ENCODE measurements at regions of chr10 and their contacts with region 1.

Region 1: DNA sequence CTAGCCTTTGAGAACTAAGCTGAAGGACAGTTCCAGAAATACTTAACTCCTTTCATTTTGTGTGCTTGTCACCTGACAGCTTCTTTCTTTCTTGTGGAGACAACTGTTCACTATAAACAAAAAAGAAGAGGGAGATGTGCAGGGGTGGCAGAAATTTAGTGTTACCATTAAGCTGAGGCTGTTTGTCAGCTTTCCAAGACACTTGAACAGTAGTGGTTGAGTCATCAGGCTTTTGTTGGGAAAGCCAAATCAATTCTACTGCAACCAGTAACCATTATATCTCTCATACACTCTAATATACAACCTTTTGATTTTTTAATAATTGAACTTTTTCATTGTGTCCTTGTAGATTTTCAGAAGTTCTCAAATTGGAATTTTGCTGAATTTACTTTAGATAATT is 75.3 kb downstream of the POLL start:
- DNase-seq: no peak
- H3K4me3 ChIP-seq: no peak overlapping the region
- H3K27ac ChIP-seq: no peak overlapping the region
- H3K4me1 ChIP-seq: no peaks in the 10 kb centered on the region
- H3K27me3 ChIP-seq: no peaks in the 10 kb centered on the region
- CTCF ChIP-seq: no peak
- EP300 ChIP-seq: no peak
- POLR2A ChIP-seq: no peak

Region 2: GRCh38 chr10:101493782-101494281 is 18.9 kb before region 1 on chr10:
- intact Hi-C with region 1: loop called in 1 of 4 experiments (anchors 1 kb)
- DNase-seq: no peak
- H3K4me3 ChIP-seq: no peak overlapping the region
- H3K27ac ChIP-seq: no peak overlapping the region
- H3K4me1 ChIP-seq: no peaks in the 10 kb centered on the region
- H3K27me3 ChIP-seq: no peaks in the 10 kb centered on the region
- CTCF ChIP-seq: no peak
- EP300 ChIP-seq: no peak
- POLR2A ChIP-seq: no peak